ENCODE measurements at regions of chr4 and their contacts with region 1.

Region 1: DNA sequence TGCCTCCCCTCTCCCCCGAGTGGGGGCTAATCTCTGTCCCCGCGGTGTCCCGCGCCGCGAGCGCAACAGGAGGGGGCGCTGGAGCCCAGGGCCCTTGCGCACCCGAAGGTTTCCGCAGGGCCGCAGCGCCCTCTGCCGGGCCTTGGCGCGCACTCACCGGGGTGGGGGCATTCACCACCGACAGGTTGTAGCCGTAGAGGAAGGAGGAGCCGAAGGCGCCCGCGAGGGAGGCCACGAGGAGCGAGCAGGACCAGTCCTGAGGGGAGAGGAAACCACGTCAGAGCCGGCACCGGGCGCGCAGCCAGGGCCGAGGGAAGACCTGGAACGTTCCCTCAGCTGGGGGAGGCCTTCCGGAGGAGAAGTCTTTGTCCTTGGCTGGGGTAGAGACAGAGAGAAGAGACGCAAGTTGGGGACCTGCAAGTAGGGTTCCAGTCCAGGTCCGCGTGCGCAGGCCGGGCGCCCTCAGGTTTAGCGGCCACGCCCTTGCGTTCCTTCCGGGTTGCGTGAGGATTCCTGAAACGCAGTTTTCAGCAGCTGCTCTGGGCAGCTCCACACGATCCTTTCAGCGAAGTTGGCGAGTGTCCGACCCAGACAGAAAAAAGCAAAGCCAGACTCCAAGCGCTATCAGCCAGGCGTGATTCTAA is 2.4 kb downstream of the SLC2A9 start:
- DNase-seq: peak; percentile 92 to 96 (median 94)
- ATAC-seq: peak; percentile 96 to 97 (median 97)
- H3K4me3 ChIP-seq: peak overlapping the region; percentile 9 to 40 (median 30)
- H3K27ac ChIP-seq: peak overlapping the region; percentile 61 to 84 (median 73)
- H3K4me1 ChIP-seq: no peaks in the 10 kb centered on the region
- H3K27me3 ChIP-seq: no peaks in the 10 kb centered on the region
- CTCF ChIP-seq: peak; percentile 82 to 94 (median 88)

Region 2: GRCh38 chr4:9704551-9705332 is 314.2 kb before region 1 on chr4:
- intact Hi-C with region 1: loop called in 1 of 3 experiments (anchors 10 kb)
- DNase-seq: no peak
- ATAC-seq: no peak
- H3K4me3 ChIP-seq: no peak overlapping the region
- H3K27ac ChIP-seq: no peak overlapping the region
- H3K4me1 ChIP-seq: no peaks in the 10 kb centered on the region
- H3K27me3 ChIP-seq: no peaks in the 10 kb centered on the region
- CTCF ChIP-seq: no peak

Region 3: GRCh38 chr4:9765091-9765490 is 253.8 kb before region 1 on chr4:
- intact Hi-C with region 1: loop called in 2 of 3 experiments (anchors 5 kb)
- DNase-seq: no peak
- ATAC-seq: no peak
- H3K4me3 ChIP-seq: no peak overlapping the region
- H3K27ac ChIP-seq: no peak overlapping the region
- H3K4me1 ChIP-seq: no peaks in the 10 kb centered on the region
- H3K27me3 ChIP-seq: no peaks in the 10 kb centered on the region
- CTCF ChIP-seq: peak in 1 of 4 donors; percentile 14